GM10248 (cell line): ENCODE measurements at regions of chr11 and their contacts with region 1.

Region 1: GRCh38 chr11:134082990-134083389 is 14.1 kb downstream of the JAM3 start:
- DNase-seq: no peak
- CTCF ChIP-seq: no peak

Region 2: GRCh38 chr11:134044514-134045284 is 38.3 kb before region 1 on chr11:
- CTCF ChIA-PET with region 1: no interaction called
- POLR2A ChIA-PET with region 1: no interaction called
- DNase-seq: no peak
- CTCF ChIP-seq: no peak

Region 3: GRCh38 chr11:134071766-134072402 is 11.1 kb before region 1 on chr11:
- CTCF ChIA-PET with region 1: interaction called, 11 read pairs
- POLR2A ChIA-PET with region 1: no interaction called
- DNase-seq: no peak
- CTCF ChIP-seq: no peak